A673 (cell line): ENCODE measurements at regions of chr1 and their contacts with region 1.

Region 1: GRCh38 chr1:229661022-229661877 is 35.2 kb downstream of the URB2 start:
- DNase-seq: peak; percentile 86
- H3K4me3 ChIP-seq: no peak overlapping the region
- H3K27ac ChIP-seq: peak overlapping the region; percentile 15
- H3K4me1 ChIP-seq: peaks cover 24% of the 10 kb centered on the region
- H3K27me3 ChIP-seq: no peaks in the 10 kb centered on the region
- CTCF ChIP-seq: peak; percentile 96

Region 2: DNA sequence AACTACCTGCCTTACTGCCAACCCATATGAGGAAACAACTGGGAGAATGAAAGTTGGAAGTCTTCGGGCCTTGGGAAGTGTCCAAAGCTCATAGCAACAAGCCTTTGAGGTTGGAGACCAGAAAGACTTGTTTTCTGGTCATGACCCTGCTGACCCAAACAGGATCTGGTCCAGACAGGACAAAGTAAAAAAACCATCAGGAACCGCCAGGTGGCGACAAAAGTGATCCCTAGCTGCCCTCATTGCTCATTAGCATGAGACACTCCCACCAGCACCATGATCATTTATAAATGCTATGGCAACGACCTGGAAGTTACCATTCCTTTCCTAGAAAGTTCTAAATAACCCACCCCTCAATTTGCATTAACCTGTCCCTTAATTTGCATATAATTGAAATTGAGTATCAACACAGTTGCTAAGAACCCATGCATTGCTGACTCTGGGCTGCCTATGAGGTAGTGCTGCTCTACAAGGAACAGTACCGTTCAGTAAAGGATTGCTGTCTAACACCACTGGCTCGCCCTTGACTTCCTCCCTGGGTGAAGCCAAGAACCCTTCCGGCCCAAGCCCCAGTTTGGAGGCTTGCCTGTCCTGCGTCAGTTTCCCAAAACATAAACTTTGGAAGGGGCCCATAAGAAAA is 53.8 kb after region 1 on chr1:
- CTCF ChIA-PET with region 1: no interaction called
- POLR2A ChIA-PET with region 1: no interaction called
- intact Hi-C with region 1: no loop called
- DNase-seq: peak; percentile 34
- H3K4me3 ChIP-seq: no peak overlapping the region
- H3K27ac ChIP-seq: no peak overlapping the region
- H3K4me1 ChIP-seq: peaks cover 6% of the 10 kb centered on the region
- H3K27me3 ChIP-seq: no peaks in the 10 kb centered on the region
- CTCF ChIP-seq: peak; percentile 53

Region 3: DNA sequence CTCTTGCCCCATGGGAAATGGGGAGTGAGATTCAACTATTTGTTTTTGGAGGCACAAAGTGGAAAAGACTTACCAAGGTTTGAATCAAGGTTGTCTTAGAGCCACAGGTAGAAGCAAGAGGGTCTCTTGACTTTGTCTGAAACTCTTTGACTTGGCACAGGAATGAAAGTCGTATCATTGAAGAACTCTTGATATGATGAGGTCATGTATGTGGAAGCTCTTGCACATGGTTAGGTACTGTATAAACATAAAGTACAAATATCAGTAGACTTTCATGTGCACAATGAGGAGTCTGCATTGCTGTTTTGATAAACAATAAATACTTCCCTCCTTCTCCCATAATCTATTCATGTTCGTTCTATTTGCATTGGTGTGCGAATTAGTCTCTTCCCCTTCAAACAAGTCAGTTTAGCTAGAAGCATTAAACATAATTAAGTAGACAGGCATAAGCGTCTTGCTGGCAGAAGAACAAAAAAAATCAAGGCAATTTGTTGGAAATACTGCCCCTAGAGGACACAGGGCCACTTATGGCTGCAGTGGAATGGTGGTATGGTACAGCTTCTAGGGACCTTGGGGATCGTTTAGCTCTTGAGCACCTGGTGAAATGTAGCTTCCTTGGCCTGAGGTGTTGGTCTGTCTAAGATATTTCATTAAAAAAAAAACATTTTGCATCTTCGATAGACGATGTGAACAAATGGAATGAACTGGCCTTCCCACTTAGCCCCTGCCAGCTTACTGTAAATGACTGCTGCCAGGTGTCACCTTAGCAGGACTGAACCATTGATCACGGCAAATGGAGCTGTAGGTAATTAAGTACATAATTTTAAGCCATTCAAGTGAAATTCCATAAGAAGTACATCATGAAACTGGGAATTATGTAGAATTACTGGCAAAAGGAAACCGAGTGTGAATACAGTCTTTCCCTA is 187.8 kb after region 1 on chr1:
- CTCF ChIA-PET with region 1: interaction called, 3 read pairs
- POLR2A ChIA-PET with region 1: no interaction called
- intact Hi-C with region 1: loop called (anchors 5 kb)
- DNase-seq: peak; percentile 68
- H3K4me3 ChIP-seq: no peak overlapping the region
- H3K27ac ChIP-seq: no peak overlapping the region
- H3K4me1 ChIP-seq: peaks cover 4% of the 10 kb centered on the region
- H3K27me3 ChIP-seq: no peaks in the 10 kb centered on the region
- CTCF ChIP-seq: peak; percentile 80

Region 4: GRCh38 chr1:230167419-230167852 is 506.2 kb after region 1 on chr1:
- CTCF ChIA-PET with region 1: no interaction called
- POLR2A ChIA-PET with region 1: no interaction called
- intact Hi-C with region 1: loop called (anchors 5 kb)
- DNase-seq: peak; percentile 73
- H3K4me3 ChIP-seq: no peak overlapping the region
- H3K27ac ChIP-seq: no peak overlapping the region
- H3K4me1 ChIP-seq: peaks cover 33% of the 10 kb centered on the region
- H3K27me3 ChIP-seq: no peaks in the 10 kb centered on the region
- CTCF ChIP-seq: peak; percentile 74

Region 5: GRCh38 chr1:230310381-230311163 is 649.3 kb after region 1 on chr1:
- CTCF ChIA-PET with region 1: interaction called, 4 read pairs
- POLR2A ChIA-PET with region 1: no interaction called
- intact Hi-C with region 1: loop called (anchors 1 kb)
- DNase-seq: peak; percentile 81
- H3K4me3 ChIP-seq: no peak overlapping the region
- H3K27ac ChIP-seq: no peak overlapping the region
- H3K4me1 ChIP-seq: peaks cover 16% of the 10 kb centered on the region
- H3K27me3 ChIP-seq: no peaks in the 10 kb centered on the region
- CTCF ChIP-seq: peak; percentile 97